Posterior cingulate gyrus (tissue), 11 donors: ENCODE measurements at regions of chr1 and their contacts with region 1.

Region 1: GRCh38 chr1:29245876-29246275 is 9.6 kb downstream of the PTPRU start:
- DNase-seq: peak in 8 of 10 donors; percentile 54 to 93 (median 60)

Region 2: DNA sequence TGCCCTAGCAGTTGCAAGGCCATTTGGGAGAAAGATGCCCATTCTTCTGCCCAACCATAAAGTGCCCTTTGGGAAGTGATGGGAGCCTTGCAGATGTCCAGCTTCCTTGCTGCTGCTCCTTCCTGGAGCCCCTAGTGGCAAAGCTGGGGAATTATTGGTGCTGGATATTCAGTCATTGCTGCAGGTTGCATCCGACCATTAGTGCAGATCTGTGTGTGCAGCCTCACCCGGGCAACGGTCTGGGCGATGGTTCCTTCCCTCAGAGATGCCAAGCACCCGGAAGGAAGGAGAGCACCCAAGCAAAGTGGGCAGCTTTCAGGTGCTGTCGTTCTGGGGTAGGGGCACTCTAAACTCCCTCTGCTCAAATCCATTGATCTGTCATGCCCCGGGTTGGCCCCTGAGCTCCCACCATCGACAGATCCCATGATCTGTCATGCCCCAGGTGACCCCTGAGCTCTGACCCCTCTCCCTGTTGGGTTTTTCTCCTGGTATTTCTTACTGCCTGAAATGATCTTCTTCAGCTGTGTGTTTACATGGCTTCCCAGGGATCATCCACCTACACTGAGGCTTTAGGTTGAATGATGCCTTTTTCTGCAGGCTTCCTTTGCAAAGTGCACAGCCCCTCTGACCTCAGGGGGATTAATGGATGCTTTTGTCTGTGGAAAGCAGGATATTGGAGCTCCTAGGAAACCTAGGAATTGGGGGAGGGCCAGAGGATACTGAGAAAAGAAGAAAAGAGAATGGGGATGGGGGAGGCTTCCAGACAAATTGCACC is 457.9 kb after region 1 on chr1:
- intact Hi-C with region 1: loop called (anchors 10 kb)
- DNase-seq: peak in 4 of 10 donors; percentile 13 to 88 (median 20)